GM12878 (cell line): ENCODE measurements at regions of chr5 and their contacts with region 1.

Region 1: DNA sequence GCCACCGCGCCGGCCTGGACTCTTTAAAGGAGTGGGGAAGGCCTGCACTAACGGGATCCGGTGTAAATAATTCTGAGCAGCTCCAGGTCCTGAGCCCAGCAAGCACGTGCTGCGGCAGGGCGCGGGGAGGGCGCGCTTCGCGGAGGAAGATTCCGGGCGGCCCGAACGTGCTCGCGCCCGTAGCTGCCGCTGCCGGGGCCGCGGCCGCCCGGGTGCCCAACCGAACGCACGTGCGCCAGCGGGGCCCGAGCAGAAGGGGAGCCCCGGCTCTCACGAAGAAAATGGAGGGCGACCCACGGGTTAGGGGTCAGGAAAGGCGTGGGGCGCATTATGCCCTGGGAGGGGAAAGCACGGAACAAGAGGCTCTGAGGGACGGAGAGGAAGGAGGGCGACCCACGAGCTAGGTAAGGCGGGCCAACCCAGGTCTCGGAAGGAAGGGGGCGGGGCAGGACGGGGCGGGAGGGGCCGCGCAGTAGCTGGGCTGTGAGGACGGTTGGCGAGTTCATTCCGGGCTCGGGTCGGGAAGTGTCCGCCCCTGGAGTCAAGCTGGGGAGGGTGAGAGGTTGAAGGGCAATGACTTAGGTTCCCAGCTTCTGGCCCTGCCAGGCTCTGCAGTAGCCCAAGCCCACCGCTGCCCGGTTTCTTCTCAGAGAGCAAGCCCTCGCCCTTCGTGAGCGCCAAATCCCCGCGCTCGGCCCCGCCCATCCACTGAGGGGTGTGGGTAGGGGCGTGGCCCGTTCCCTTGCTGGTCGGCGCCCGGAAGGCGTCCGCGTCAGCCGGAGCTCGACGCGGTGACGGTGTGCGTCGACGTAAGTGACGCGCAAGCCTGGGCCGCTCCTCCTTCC is at the start of gene ZNF131:
- DNase-seq: peak; percentile 87
- ATAC-seq: peak; percentile 93
- H3K4me3 ChIP-seq: peak within 1 kb of the TSS; percentile 96
- H3K27ac ChIP-seq: peak within 1 kb of the TSS; percentile 94
- H3K4me1 ChIP-seq: peaks cover 10% of the 10 kb centered on the region
- H3K27me3 ChIP-seq: peaks cover 0 to 1% of the 10 kb centered on the region in 2 experiments; a peak in 1 of 4 replicates
- CTCF ChIP-seq: no peak
- EP300 ChIP-seq: peak in 1 of 2 experiments; percentile 25; a peak in 1 of 4 replicates
- POLR2A ChIP-seq: peak; percentile 87
- RAD21 ChIP-seq: no peak
- polyA plus RNA-seq, gene ZNF131: 16.4 to 23.3 TPM

Region 2: DNA sequence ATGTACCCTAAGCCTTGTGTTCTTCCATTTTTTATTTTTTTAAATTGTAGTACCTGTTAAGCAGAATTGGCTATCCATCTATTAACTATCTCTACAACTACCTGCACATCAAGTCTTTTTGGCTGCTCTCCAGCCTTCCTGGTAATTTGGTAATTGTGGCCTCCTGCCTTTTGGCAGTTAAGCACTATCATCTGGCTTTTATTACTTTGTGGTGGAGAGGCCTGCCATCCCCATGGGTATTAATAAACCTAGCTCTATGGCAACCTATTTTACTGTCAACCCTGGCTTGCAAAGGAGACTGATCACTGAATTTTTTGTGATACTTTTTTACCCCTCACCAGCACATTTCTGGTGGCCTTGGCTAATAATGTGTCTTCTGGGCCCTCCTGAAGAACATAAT is 329.8 kb before region 1 on chr5:
- CTCF ChIA-PET with region 1: no interaction called
- POLR2A ChIA-PET with region 1: no interaction called
- RAD21 ChIA-PET with region 1: no interaction called
- SMC1A ChIA-PET with region 1: no interaction called
- in situ Hi-C with region 1: no loop called
- intact Hi-C with region 1: no loop called
- DNase-seq: no peak
- ATAC-seq: no peak
- H3K4me3 ChIP-seq: no peak overlapping the region
- H3K27ac ChIP-seq: no peak overlapping the region
- H3K4me1 ChIP-seq: no peaks in the 10 kb centered on the region
- H3K27me3 ChIP-seq: no peaks in the 10 kb centered on the region
- CTCF ChIP-seq: no peak
- EP300 ChIP-seq: no peak
- POLR2A ChIP-seq: no peak
- RAD21 ChIP-seq: no peak

Region 3: GRCh38 chr5:43019614-43020293 is 101.2 kb before region 1 on chr5:
- CTCF ChIA-PET with region 1: interaction called, 9 read pairs
- POLR2A ChIA-PET with region 1: interaction called, 14 read pairs
- RAD21 ChIA-PET with region 1: no interaction called
- SMC1A ChIA-PET with region 1: interaction called, 4 read pairs
- in situ Hi-C with region 1: no loop called
- intact Hi-C with region 1: loop called (anchors 2 kb)
- DNase-seq: no peak
- ATAC-seq: peak; percentile 78
- H3K4me3 ChIP-seq: peak overlapping the region; percentile 83
- H3K27ac ChIP-seq: peak overlapping the region; percentile 94
- H3K4me1 ChIP-seq: peaks cover 16% of the 10 kb centered on the region
- H3K27me3 ChIP-seq: no peaks in the 10 kb centered on the region
- CTCF ChIP-seq: peak; percentile 42 to 73 (median 59)
- EP300 ChIP-seq: no peak
- POLR2A ChIP-seq: peak; percentile 57
- RAD21 ChIP-seq: peak; percentile 40; the same call in 1 of the 2 replicates

Region 4: GRCh38 chr5:43105369-43106289 is 15.3 kb before region 1 on chr5:
- CTCF ChIA-PET with region 1: interaction called, 68 read pairs
- POLR2A ChIA-PET with region 1: interaction called, 9 read pairs
- RAD21 ChIA-PET with region 1: interaction called, 4 read pairs
- SMC1A ChIA-PET with region 1: interaction called, 9 read pairs
- in situ Hi-C with region 1: no loop called
- intact Hi-C with region 1: no loop called
- DNase-seq: peak; percentile 79
- ATAC-seq: peak; percentile 99
- H3K4me3 ChIP-seq: peak overlapping the region; percentile 73
- H3K27ac ChIP-seq: peak overlapping the region; percentile 55
- H3K4me1 ChIP-seq: peaks cover 5% of the 10 kb centered on the region
- H3K27me3 ChIP-seq: no peaks in the 10 kb centered on the region
- CTCF ChIP-seq: peak; percentile 100
- EP300 ChIP-seq: no peak
- POLR2A ChIP-seq: peak; percentile 26; the same call in 1 of the 2 replicates
- RAD21 ChIP-seq: peak; percentile 93

Region 5: DNA sequence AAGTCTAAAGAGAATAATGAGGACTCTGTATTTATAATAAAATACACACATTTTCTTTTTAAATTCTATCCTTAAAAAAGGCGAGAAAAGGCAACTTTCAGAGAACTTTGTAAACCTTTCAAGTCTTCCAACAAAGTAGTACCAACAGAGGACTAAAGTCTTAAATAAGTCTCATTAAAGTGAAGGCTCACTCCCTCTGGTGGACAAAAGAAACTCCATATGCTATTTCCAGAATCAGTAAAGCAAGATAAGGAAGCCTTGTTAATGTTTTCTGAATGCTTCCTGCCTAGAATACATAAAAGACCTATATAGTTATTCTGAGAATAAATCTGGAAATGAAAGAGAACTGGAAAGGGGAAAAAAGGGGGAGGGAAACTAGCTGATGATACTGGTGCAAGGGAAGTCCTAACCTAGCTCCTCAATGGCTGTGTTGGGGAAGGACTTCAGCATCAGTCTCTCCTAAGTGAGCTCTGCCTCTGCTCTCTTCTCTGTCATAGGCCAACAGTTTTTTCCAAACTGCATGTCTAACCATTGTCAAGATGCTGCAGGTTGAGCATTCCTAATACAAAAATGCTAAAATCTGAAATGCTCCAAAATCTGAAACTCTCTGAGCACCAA is 185.1 kb after region 1 on chr5:
- CTCF ChIA-PET with region 1: interaction called, 24 read pairs
- POLR2A ChIA-PET with region 1: interaction called, 46 read pairs
- RAD21 ChIA-PET with region 1: interaction called, 38 read pairs
- SMC1A ChIA-PET with region 1: interaction called, 13 read pairs
- in situ Hi-C with region 1: no loop called
- intact Hi-C with region 1: loop called (anchors 5 kb)
- DNase-seq: peak; percentile 30
- ATAC-seq: peak; percentile 72
- H3K4me3 ChIP-seq: peak overlapping the region; percentile 27; the same call in 1 of the 2 replicates
- H3K27ac ChIP-seq: no peak overlapping the region
- H3K4me1 ChIP-seq: peaks cover 4% of the 10 kb centered on the region; the same call in 1 of the 2 replicates
- H3K27me3 ChIP-seq: no peaks in the 10 kb centered on the region
- CTCF ChIP-seq: peak; percentile 56 to 69 (median 67)
- EP300 ChIP-seq: no peak
- POLR2A ChIP-seq: no peak
- RAD21 ChIP-seq: peak; percentile 77